Activated naive CD4-positive, alpha-beta T cell treated with anti-CD3 and anti-CD28 coated beads for 36 hours (primary cell): ENCODE measurements at regions of chrX and their contacts with region 1.

Region 1: GRCh38 chrX:15749642-15750610 is 11.9 kb downstream of the CA5B start:
- DNase-seq: peak; percentile 31
- H3K4me3 Mint-ChIP-seq: peak overlapping the region; percentile 47
- H3K27ac Mint-ChIP-seq: peak overlapping the region; percentile 92
- H3K4me1 Mint-ChIP-seq: peaks cover 68% of the 10 kb centered on the region
- H3K27me3 Mint-ChIP-seq: no peaks in the 10 kb centered on the region

Region 2: DNA sequence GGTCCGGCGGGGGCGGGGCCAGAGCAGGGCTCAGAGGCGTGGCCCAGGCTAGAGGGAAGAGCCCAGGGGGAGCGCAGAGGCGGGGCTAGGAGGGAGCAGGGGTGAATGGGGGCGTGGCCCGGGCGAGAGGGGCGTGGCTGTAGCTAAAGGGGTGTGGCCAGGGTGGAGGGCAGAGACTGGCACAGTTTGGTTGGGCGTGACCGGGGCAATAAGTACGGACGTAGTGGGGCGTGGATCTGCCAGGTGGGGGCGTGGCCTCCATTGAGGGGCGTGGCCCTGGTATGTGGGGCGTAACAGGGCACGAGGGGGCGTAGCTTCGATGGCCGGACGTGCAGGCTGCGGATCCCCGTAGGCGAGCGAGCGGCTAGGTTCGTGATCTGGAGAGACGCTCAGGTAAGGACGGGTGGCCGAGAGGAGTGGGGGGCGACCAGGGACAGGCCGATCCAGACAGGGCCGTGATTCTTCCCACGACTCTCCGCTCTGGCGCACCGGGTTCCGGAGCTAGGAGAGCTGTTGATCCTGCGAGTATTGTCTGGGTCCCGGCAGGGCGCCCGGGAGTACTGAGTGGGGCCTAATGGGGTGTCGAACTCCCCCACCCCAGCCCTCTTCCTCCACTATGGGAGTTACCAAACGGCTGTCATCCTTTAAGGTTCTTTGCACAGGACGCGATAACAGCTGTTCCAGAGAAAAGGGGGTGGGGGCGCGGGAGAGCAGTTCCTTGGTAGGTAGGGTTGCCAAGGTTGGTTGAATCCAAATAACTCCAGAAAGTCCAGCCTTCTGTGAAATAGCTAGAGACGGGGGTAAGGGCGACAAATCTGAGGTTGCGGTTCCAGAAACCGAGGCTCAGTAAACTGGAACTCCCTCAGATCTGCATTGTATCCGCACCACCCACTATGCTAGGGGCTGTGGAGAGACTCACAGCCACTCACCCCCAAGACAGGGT is 11.7 kb before region 1 on chrX and contains the start of gene CA5B:
- CTCF ChIA-PET with region 1: interaction called, 7 read pairs
- intact Hi-C with region 1: loop called (anchors 1 kb)
- DNase-seq: peak; percentile 96
- H3K4me3 Mint-ChIP-seq: peak within 1 kb of the TSS; percentile 83
- H3K27ac Mint-ChIP-seq: no peak within 1 kb of the TSS
- H3K4me1 Mint-ChIP-seq: peaks cover 37% of the 10 kb centered on the region
- H3K27me3 Mint-ChIP-seq: no peaks in the 10 kb centered on the region
- total RNA-seq, gene CA5B: 7.0 to 9.5 TPM

Region 3: DNA sequence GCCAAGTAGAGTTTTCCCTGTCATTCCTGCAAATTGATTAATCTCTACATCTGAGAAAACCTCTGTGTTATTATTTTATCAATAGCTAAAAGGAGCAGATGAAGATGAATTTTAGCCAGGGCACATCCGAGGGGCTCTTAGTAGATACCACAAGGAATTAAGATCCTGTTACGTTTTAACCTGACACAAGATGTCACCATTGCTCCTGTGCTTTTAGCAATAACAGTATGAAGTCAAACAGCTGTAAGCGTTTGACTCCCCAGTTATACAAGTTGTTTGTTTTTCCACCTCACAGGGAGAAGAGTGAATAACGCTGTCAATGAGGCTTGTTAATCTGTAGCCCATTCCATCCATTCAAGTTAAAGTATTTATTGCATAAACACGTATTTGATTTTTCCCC is 180.7 kb after region 1 on chrX:
- CTCF ChIA-PET with region 1: no interaction called
- intact Hi-C with region 1: no loop called
- DNase-seq: no peak
- H3K4me3 Mint-ChIP-seq: no peak overlapping the region
- H3K27ac Mint-ChIP-seq: no peak overlapping the region
- H3K4me1 Mint-ChIP-seq: no peaks in the 10 kb centered on the region
- H3K27me3 Mint-ChIP-seq: peaks cover 13% of the 10 kb centered on the region